Gastrocnemius medialis (tissue), 4 donors: ENCODE measurements at regions of chr19 and their contacts with region 1.

Region 1: DNA sequence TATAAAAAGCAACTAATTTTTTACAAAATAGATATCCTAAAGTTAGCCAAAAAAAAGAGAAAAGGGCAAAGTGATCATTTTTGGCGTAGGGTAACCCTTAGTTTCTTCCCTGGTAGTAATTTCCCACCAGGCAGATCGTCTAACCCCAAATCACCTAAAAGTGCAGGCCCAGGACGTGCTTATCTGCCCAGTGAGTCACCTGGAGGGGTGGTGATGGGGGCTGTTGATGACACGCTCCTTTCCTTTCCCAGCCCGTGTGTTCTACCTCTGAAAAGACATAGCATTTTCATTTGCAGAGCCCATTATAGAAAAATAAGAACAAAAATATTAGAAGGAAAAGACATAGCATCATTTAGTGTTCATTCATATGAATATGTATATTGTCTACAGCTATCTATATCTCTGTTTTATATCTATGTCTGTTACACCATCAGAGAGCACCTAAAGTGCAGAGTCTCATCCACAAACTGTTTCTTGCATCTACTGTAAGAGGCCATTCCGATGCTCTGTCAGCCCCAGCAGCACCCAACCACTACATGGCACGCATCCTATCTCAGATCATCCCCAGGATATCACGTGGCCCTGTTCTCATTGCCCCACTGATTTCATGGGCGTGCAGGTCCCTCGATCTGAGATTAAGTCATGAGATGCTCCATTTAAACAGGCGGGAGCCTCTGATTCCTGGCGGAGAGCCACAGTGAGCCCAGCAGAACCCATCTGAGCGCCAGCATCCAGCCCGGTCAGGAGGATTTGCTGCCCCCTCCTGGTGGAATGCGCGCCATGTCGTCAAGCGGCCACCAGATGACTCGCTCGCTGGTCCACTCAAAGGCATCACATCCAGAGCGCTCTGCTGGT is 8.5 kb upstream of the LILRB3 start:
- DNase-seq: peak; percentile 34 to 52
- ATAC-seq: peak; percentile 47 to 85
- H3K4me3 ChIP-seq: no peak overlapping the region
- H3K27ac ChIP-seq: no peak overlapping the region
- H3K4me1 ChIP-seq: no peaks in the 10 kb centered on the region
- H3K27me3 ChIP-seq: peaks cover 0 to 6% (median 5%) of the 10 kb centered on the region in 3 donors
- CTCF ChIP-seq: peak; percentile 62 to 87 (median 81)
- POLR2A ChIP-seq: no peak

Region 2: GRCh38 chr19:54168174-54168917 is 63.0 kb before region 1 on chr19:
- in situ Hi-C with region 1: loop called in 3 of 4 experiments (anchors 5 kb)
- intact Hi-C with region 1: loop called (anchors 1 kb)
- DNase-seq: peak; percentile 65 to 81
- ATAC-seq: peak; percentile 85 to 95
- H3K4me3 ChIP-seq: no peak overlapping the region
- H3K27ac ChIP-seq: no peak overlapping the region
- H3K4me1 ChIP-seq: peaks cover 0 to 7% of the 10 kb centered on the region in 2 donors
- H3K27me3 ChIP-seq: peaks cover 20 to 27% (median 23%) of the 10 kb centered on the region in 3 donors
- CTCF ChIP-seq: peak; percentile 69 to 88 (median 86)
- POLR2A ChIP-seq: no peak

Region 3: GRCh38 chr19:54287456-54287855 is 56.2 kb after region 1 on chr19:
- in situ Hi-C with region 1: no loop called
- intact Hi-C with region 1: no loop called
- DNase-seq: no peak
- ATAC-seq: no peak
- H3K4me3 ChIP-seq: no peak overlapping the region
- H3K27ac ChIP-seq: no peak overlapping the region
- H3K4me1 ChIP-seq: no peaks in the 10 kb centered on the region
- H3K27me3 ChIP-seq: no peaks in the 10 kb centered on the region
- CTCF ChIP-seq: no peak
- POLR2A ChIP-seq: no peak